Activated B cell treated with CpG ODN at 0.5 μM for 24 hours (primary cell): ENCODE measurements at regions of chr15 and their contacts with region 1.

Region 1: DNA sequence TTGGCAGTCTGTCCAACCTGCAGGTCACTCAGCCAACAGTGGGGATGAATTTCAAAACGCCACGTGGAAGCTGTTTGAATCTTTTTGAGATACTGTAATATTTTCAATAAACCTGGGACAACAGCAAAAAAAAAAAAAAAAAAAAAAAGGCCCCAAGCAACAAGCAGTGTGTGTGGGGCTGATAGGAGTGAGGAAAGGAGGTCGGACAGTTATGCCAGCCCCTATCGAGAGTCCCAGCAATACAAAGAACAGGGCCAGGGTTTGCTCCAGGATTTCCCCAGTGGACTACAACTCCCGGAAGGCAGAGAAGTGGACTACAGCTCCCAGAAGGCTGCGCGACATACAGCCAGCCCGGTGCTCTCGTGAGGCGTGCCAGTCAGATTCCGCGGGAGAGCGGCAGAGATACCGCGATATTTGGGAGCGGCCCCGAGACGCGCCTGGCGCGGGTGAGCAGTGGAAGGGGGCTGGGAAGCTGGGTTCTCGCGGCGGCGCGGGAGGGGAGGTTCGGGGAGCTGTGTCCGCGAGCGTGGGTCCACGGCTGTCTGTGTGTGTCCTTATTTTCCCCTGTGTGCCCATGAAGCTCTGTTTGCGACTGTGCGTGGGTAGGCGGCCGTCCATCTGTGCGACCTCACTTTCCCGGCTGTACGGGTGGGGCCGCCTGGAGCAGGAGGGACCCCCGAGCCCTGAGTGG is at the start of gene PPCDC:
- DNase-seq: peak; percentile 82
- ATAC-seq: peak; percentile 100
- H3K4me3 Mint-ChIP-seq: peak within 1 kb of the TSS; percentile 95
- H3K27ac Mint-ChIP-seq: peak within 1 kb of the TSS; percentile 86
- H3K4me1 Mint-ChIP-seq: peaks cover 9% of the 10 kb centered on the region
- H3K27me3 Mint-ChIP-seq: peaks cover 6% of the 10 kb centered on the region
- CTCF ChIP-seq: no peak
- total RNA-seq, gene PPCDC: 13.5 and 16.6 TPM in 2 replicates

Region 2: DNA sequence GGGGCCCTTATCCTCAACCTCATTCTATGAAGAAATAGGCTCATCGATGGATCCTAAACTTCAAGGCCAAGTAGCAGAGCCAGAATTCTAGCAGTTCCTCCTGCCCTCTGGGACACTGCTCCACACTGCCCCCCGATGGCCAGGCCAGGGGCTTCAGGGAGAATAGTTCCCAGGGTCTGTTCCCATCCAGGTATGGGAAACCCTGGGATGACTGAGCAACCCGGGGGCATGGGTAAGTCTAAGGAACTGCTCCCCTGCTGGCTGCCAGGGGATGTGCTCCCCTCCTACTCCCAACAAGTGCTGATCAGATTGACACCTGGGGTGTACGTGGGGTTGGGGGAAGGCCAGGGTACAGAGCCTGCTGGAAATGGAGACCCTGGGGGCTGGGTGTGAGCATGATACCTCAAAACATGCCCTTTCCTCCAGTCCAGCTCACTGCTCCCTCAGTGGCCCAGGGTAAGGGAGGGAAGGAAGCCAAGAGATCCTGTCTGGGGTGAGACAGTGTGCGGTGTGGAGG is 188.0 kb before region 1 on chr15:
- CTCF ChIA-PET with region 1: no interaction called
- POLR2A ChIA-PET with region 1: no interaction called
- intact Hi-C with region 1: no loop called
- DNase-seq: peak; percentile 47
- ATAC-seq: peak; percentile 71
- H3K4me3 Mint-ChIP-seq: no peak overlapping the region
- H3K27ac Mint-ChIP-seq: no peak overlapping the region
- H3K4me1 Mint-ChIP-seq: peaks cover 11% of the 10 kb centered on the region
- H3K27me3 Mint-ChIP-seq: no peaks in the 10 kb centered on the region
- CTCF ChIP-seq: no peak

Region 3: GRCh38 chr15:74956648-74957300 is 66.6 kb before region 1 on chr15 and contains the start of gene RPP25:
- CTCF ChIA-PET with region 1: no interaction called
- POLR2A ChIA-PET with region 1: interaction called, 11 read pairs
- intact Hi-C with region 1: loop called (anchors 2 kb)
- DNase-seq: peak; percentile 73
- ATAC-seq: peak; percentile 93
- H3K4me3 Mint-ChIP-seq: peak within 1 kb of the TSS; percentile 79
- H3K27ac Mint-ChIP-seq: no peak within 1 kb of the TSS
- H3K4me1 Mint-ChIP-seq: peaks cover 34% of the 10 kb centered on the region
- H3K27me3 Mint-ChIP-seq: peaks cover 29% of the 10 kb centered on the region
- CTCF ChIP-seq: no peak
- total RNA-seq, gene RPP25: 4.0 and 4.3 TPM in 2 replicates

Region 4: GRCh38 chr15:74995241-74995778 is 28.0 kb before region 1 on chr15 and contains the start of gene SCAMP5:
- CTCF ChIA-PET with region 1: no interaction called
- POLR2A ChIA-PET with region 1: interaction called, 3 read pairs
- intact Hi-C with region 1: loop called (anchors 2 kb)
- DNase-seq: peak; percentile 70
- ATAC-seq: peak; percentile 99
- H3K4me3 Mint-ChIP-seq: peak within 1 kb of the TSS; percentile 78
- H3K27ac Mint-ChIP-seq: no peak within 1 kb of the TSS
- H3K4me1 Mint-ChIP-seq: peaks cover 24% of the 10 kb centered on the region
- H3K27me3 Mint-ChIP-seq: peaks cover 66% of the 10 kb centered on the region
- CTCF ChIP-seq: no peak
- total RNA-seq, gene SCAMP5: 0.44 and 0.62 TPM in 2 replicates

Region 5: DNA sequence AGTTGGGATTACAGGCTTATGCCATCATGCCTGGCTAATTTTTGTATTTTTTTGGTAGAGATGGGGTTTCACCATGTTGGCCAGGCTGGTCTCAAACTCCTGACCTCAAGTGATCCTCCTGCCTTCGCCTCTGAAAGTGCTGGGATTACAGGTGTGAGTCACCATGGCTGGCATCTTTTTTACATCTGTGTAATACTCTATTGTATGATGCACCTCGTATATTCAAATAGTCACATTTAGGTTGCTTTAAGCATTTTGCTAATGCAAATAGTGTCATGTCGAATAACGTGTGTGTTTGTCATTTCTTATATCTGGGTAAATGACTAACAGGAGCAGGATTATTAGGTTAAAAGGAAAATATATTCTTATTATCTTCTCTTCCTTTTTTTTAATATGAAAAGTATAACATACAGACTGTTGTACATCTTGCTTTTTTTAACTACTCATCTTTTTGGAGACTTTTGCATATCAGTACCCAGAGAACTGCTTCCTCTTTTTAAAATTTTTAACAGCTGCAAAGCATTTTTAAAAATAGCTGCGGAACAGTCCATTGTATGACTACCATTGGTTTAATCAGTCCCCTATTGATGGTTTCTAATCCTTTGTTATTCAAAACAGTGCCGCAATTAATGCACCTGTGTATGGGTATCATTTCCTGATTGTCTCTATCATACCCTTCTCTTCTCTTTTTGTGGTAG is 14.5 kb before region 1 on chr15:
- CTCF ChIA-PET with region 1: interaction called, 6 read pairs
- POLR2A ChIA-PET with region 1: interaction called, 10 read pairs
- intact Hi-C with region 1: loop called (anchors 1 kb)
- DNase-seq: no peak
- ATAC-seq: peak; percentile 85
- H3K4me3 Mint-ChIP-seq: peak overlapping the region; percentile 56
- H3K27ac Mint-ChIP-seq: peak overlapping the region; percentile 86
- H3K4me1 Mint-ChIP-seq: peaks cover 44% of the 10 kb centered on the region
- H3K27me3 Mint-ChIP-seq: peaks cover 20% of the 10 kb centered on the region
- CTCF ChIP-seq: no peak

Region 6: GRCh38 chr15:75307778-75308391 is 284.6 kb after region 1 on chr15:
- CTCF ChIA-PET with region 1: no interaction called
- POLR2A ChIA-PET with region 1: no interaction called
- intact Hi-C with region 1: loop called (anchors 10 kb)
- DNase-seq: no peak
- ATAC-seq: peak; percentile 25
- H3K4me3 Mint-ChIP-seq: no peak overlapping the region
- H3K27ac Mint-ChIP-seq: no peak overlapping the region
- H3K4me1 Mint-ChIP-seq: no peaks in the 10 kb centered on the region
- H3K27me3 Mint-ChIP-seq: peaks cover 51% of the 10 kb centered on the region
- CTCF ChIP-seq: no peak

Region 7: DNA sequence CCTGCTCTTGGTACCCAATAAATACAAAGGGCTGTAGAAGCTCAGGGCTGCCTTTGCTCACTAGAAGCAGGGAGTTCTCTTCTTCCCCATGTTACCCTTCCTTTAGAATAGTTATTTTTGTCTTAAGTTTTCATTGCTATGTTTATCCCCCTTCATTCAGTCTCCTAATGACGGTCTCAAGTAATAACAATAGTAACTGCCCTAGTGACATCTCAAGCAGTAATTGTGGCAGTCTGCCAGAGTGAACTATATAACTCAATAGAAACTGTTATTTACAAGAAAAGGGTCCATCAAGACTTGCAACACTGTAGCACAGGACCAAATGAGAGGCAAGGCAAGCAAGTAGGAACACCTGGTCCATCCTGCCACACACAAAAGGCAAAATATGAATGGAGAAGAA is 460.6 kb after region 1 on chr15:
- CTCF ChIA-PET with region 1: no interaction called
- POLR2A ChIA-PET with region 1: interaction called, 20 read pairs
- intact Hi-C with region 1: no loop called
- DNase-seq: no peak
- ATAC-seq: no peak
- H3K4me3 Mint-ChIP-seq: no peak overlapping the region
- H3K27ac Mint-ChIP-seq: no peak overlapping the region
- H3K4me1 Mint-ChIP-seq: no peaks in the 10 kb centered on the region
- H3K27me3 Mint-ChIP-seq: no peaks in the 10 kb centered on the region
- CTCF ChIP-seq: no peak

Region 8: GRCh38 chr15:75517233-75517632 is 493.9 kb after region 1 on chr15:
- CTCF ChIA-PET with region 1: no interaction called
- POLR2A ChIA-PET with region 1: interaction called, 13 read pairs
- intact Hi-C with region 1: no loop called
- DNase-seq: no peak
- ATAC-seq: no peak
- H3K4me3 Mint-ChIP-seq: no peak overlapping the region
- H3K27ac Mint-ChIP-seq: no peak overlapping the region
- H3K4me1 Mint-ChIP-seq: no peaks in the 10 kb centered on the region
- H3K27me3 Mint-ChIP-seq: no peaks in the 10 kb centered on the region
- CTCF ChIP-seq: no peak